Left cardiac atrium (tissue), 4 donors: ENCODE measurements at regions of chr18 and their contacts with region 1.

Region 1: DNA sequence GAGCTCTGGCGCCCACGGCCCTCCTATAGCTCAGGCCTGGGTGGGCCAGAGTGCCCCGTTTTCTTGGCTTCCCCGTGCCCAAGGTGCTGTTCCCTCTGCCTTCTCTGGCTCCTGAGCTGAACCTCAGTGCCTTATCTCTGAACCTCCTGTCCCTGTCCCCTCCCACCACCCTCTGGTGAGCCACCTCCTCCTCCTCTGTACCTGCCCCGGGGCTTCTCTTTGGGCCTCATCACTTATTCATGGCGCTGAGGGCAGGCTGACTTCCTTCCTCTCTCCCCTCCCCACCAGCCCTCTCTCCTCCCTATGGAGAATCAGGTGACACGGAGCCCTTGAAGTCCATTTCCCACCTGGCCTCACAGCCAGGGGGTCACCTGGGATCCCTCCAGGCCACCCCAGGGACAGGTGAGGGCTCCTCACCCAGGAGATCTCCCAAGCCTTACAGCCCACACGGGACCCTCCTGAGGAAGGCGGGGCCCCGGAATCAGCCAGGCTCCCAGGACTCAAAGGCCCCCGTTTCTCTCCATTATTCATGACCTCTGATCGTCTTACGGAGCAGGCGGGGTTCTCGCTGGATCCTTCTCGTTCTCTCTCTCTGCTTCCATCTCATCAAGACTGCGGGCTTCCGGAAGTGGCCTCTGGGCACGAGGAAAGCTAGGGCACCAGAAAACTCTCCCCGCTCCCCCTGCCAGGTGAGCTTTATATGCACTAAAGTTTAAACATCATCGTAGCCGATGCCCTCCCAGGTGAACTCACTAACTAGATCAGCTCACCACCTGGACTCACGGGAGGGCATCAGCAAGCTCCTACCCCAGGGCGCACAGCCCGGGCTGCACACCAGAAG is at the start of gene LOXHD1:
- DNase-seq: no peak
- ATAC-seq: no peak
- total RNA-seq, gene LOXHD1: 0.24 to 0.59 TPM

Region 2: DNA sequence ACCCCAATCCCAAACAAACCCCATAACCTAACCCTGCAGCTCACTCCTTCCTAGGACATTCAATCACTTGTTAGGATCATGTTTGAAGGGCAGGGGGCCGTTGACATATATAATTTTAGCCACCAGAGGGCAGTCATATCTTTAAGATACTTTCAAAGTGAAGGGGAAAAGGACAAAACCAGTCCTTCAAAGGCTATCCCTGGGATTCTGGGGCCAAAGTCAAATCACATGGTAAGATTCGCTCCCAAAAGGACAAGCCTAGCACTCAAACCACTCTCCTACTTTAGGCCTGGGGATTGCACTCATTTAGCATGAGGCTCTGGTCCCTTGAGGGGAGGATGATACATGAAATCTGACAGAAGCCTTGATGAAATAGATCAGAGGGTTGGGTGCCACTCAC is 508.5 kb before region 1 on chr18:
- intact Hi-C with region 1: loop called (anchors 2 to 5 kb)
- DNase-seq: no peak
- ATAC-seq: peak; percentile 13 to 50

Region 3: DNA sequence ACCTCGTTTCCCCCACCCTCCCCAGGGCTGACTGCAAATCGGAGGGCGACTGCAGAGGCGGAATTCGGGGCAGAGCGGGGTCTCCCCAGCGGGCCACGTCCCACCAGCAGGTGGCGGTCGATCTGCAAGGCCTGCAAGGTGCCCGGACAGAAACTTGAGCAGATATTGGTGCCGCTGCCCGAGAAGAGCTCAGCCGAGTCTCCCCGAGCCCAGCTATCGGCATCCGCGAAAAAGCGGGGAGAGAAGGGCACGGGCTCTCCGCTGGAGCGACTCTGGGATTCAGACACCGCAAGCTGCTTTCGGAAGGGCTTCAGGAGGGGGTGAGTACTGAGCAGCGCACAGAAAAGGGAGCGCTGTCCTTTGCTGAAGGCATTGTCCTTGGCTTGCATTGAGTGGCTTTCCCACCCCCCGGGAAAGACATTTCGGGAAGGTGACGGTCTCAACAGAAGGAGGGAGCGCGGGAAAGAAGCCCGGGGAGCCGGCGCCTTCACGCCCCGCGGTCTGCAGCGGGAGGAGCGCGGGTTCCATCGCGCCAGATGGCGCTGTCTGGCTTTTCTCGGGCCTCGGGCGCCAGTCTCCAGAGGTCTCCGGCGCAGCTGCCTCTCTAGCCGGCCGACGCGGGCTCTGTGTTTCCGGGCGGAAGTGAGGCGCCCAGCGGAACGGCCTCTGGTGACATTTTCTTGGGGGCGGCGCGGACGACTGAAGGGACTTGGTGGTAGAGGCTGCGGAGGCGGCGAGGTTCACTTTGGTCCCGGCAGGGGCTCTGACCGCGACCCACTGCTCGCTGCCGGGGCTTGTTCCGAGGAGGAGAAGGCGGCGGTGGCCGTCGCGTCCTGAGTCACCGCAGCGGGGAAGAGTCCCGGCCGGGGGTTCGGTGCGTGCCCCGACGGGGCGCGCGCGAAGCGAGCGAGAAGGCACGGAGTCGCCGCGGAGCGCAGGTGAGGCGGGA is 483.7 kb before region 1 on chr18:
- intact Hi-C with region 1: loop called in 1 of 2 experiments (anchors 2 kb)
- DNase-seq: peak; percentile 96
- ATAC-seq: peak; percentile 97 to 98

Region 4: GRCh38 chr18:46555724-46556123 is 101.6 kb before region 1 on chr18:
- intact Hi-C with region 1: loop called (anchors 2 to 5 kb)
- DNase-seq: no peak
- ATAC-seq: peak; percentile 44 to 65